HEK293 (cell line): ENCODE measurements at regions of chr16 and their contacts with region 1.

Region 1: DNA sequence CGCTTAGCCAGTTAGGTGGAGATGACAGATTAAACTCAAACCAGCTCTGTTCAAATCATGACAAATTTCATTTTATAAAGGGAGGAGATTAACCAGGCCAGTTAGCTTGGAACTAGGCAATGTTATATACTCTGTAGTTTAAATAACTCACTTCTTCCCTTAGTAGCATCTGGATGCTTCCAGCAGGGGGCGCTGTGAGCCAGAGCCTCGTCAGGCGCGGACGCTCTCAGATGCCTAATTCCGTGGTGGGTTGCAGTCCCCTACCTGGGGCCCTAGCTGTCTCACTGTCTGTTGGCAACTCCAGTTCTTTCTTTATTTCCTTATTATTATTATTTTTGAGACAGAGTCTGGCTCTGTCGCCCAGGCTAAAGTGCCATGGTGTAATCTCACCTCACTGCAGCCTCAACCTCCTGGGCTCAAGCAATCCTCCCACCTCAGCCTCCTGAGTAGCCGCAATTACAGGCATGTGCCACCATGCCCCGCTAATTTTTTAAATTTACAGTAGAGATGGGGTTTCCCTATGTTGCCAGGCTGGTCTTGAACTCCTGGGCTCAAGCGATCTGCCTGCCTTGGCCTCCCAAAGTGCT is 17.3 kb upstream of the WFDC1 start:
- H3K4me3 ChIP-seq: no peak overlapping the region
- H3K27ac ChIP-seq: no peak overlapping the region
- H3K4me1 ChIP-seq: no peaks in the 10 kb centered on the region
- CTCF ChIP-seq: peak; percentile 62; the same call in 1 of the 2 replicates

Region 2: GRCh38 chr16:84255050-84255810 is 22.1 kb before region 1 on chr16:
- CTCF ChIA-PET with region 1: interaction called, 14 read pairs
- POLR2A ChIA-PET with region 1: no interaction called
- H3K4me3 ChIP-seq: no peak overlapping the region
- H3K27ac ChIP-seq: no peak overlapping the region
- H3K4me1 ChIP-seq: no peaks in the 10 kb centered on the region
- CTCF ChIP-seq: no peak

Region 3: DNA sequence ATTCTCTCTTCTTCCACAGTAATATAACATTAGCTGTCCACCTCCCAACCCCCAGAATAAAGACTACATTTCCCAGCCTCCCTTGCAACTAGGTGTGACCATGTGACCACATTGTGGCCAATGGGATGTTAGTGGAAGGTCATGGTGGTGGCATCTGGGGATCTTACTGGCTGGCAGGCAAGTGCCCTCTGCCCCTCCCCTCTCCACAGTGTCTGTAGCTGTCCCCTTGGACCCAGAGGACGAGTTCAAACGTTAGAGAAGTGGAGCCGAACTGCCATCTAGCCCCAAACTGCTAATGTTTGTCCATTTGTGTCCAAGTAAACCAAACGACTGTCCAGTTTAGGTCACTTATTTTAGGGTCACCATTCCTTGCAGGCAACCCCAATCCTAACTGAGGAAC is 10.9 kb before region 1 on chr16:
- CTCF ChIA-PET with region 1: interaction called, 29 read pairs
- POLR2A ChIA-PET with region 1: no interaction called
- H3K4me3 ChIP-seq: no peak overlapping the region
- H3K27ac ChIP-seq: no peak overlapping the region
- H3K4me1 ChIP-seq: no peaks in the 10 kb centered on the region
- CTCF ChIP-seq: no peak

Region 4: GRCh38 chr16:84308120-84308519 is 30.8 kb after region 1 on chr16:
- CTCF ChIA-PET with region 1: interaction called, 24 read pairs
- POLR2A ChIA-PET with region 1: interaction called, 4 read pairs
- H3K4me3 ChIP-seq: no peak overlapping the region
- H3K27ac ChIP-seq: no peak overlapping the region
- H3K4me1 ChIP-seq: no peaks in the 10 kb centered on the region
- CTCF ChIP-seq: peak; percentile 70

Region 5: GRCh38 chr16:84406006-84406963 is 129.0 kb after region 1 on chr16:
- CTCF ChIA-PET with region 1: no interaction called
- POLR2A ChIA-PET with region 1: no interaction called
- H3K4me3 ChIP-seq: no peak overlapping the region
- H3K27ac ChIP-seq: no peak overlapping the region
- H3K4me1 ChIP-seq: no peaks in the 10 kb centered on the region
- CTCF ChIP-seq: no peak

Region 6: GRCh38 chr16:84504420-84505248 is 227.3 kb after region 1 on chr16 and contains the start of gene MEAK7:
- CTCF ChIA-PET with region 1: interaction called, 28 read pairs
- POLR2A ChIA-PET with region 1: no interaction called
- H3K4me3 ChIP-seq: peak within 1 kb of the TSS; percentile 87
- H3K27ac ChIP-seq: peak within 1 kb of the TSS; percentile 42; the same call in 1 of the 2 replicates
- H3K4me1 ChIP-seq: peaks cover 10% of the 10 kb centered on the region
- CTCF ChIP-seq: peak; percentile 52